ENCODE measurements at regions of chr11 and their contacts with region 1.

Region 1: GRCh38 chr11:100575870-100576705 is 111.0 kb upstream of the ARHGAP42 start:
- DNase-seq: no peak
- H3K4me3 ChIP-seq: no peak overlapping the region
- H3K27ac ChIP-seq: no peak overlapping the region
- H3K4me1 ChIP-seq: peaks cover under 1% of the 10 kb centered on the region
- H3K27me3 ChIP-seq: no peaks in the 10 kb centered on the region
- CTCF ChIP-seq: peak; percentile 87

Region 2: DNA sequence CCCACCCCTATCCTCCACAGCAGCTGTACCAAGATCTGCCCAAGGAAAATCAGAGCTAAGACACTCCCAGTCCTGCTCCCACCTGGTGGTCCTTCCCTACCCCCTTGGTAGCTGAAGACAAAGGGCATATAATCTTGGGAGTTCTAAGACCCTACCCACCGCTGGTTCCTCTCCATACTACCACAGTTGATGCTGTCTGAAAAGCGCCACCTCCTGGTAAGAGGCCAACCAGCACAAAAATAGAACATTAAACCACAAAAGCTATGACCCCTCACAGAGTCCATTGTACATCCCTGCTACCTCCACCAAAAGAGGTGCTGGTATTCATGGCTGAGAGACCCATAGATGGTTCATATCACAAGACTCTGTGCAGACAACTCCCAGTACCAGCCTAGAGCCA is 50.5 kb before region 1 on chr11:
- intact Hi-C with region 1: no loop called
- DNase-seq: no peak
- H3K4me3 ChIP-seq: no peak overlapping the region
- H3K27ac ChIP-seq: no peak overlapping the region
- H3K4me1 ChIP-seq: no peaks in the 10 kb centered on the region
- H3K27me3 ChIP-seq: no peaks in the 10 kb centered on the region
- CTCF ChIP-seq: no peak

Region 3: DNA sequence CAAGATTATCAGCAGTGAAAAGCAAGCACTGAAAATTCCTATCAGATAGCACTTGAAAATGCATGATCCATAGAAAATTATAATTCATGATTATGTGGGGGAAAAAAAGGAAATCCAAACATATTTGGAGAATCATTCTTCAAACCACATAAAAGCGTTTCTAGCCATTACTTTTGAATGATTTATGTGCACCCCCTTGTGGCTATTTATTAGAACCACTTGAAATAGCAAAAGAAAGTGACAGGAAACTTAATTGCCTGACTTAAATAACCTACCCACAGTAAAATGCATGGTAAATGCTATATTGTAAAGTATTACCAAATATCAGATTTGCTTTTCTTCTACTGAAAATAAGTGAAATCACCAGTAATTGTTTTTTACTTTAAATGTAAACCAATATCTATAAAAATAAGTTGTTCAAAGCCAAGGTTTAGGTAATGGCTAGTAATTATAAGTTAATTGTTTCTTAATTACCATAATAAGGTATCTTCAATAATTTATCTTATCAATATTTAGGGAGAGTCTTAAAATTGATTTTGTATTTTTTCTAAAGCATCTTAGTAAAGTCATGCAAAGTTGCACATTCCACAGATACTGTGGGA is 279.5 kb after region 1 on chr11:
- intact Hi-C with region 1: loop called (anchors 2 kb)
- DNase-seq: no peak
- H3K4me3 ChIP-seq: no peak overlapping the region
- H3K27ac ChIP-seq: no peak overlapping the region
- H3K4me1 ChIP-seq: peaks cover 14% of the 10 kb centered on the region
- H3K27me3 ChIP-seq: no peaks in the 10 kb centered on the region
- CTCF ChIP-seq: peak; percentile 80

Measured in left ventricle myocardium inferior (tissue), 1 donor.